Mammary epithelial cell (primary cell): ENCODE measurements at regions of chr17 and their contacts with region 1.

Region 1: GRCh38 chr17:27353461-27354050 is 59.6 kb downstream of the WSB1 start:
- DNase-seq: peak; percentile 89
- H3K4me3 ChIP-seq: peak overlapping the region; percentile 69 to 73 (median 72)
- H3K27ac ChIP-seq: peak overlapping the region; percentile 78
- H3K4me1 ChIP-seq: peaks cover 10% of the 10 kb centered on the region
- H3K27me3 ChIP-seq: no peaks in the 10 kb centered on the region
- CTCF ChIP-seq: peak; percentile 54 to 60

Region 2: GRCh38 chr17:27236717-27237315 is 116.7 kb before region 1 on chr17:
- CTCF ChIA-PET with region 1: no interaction called
- dilution Hi-C with region 1: no loop called
- in situ Hi-C with region 1: no loop called
- intact Hi-C with region 1: loop called (anchors 2 kb)
- DNase-seq: peak; percentile 52
- H3K4me3 ChIP-seq: no peak overlapping the region
- H3K27ac ChIP-seq: no peak overlapping the region
- H3K4me1 ChIP-seq: peaks cover 7% of the 10 kb centered on the region
- H3K27me3 ChIP-seq: no peaks in the 10 kb centered on the region
- CTCF ChIP-seq: peak; percentile 90 to 96

Region 3: DNA sequence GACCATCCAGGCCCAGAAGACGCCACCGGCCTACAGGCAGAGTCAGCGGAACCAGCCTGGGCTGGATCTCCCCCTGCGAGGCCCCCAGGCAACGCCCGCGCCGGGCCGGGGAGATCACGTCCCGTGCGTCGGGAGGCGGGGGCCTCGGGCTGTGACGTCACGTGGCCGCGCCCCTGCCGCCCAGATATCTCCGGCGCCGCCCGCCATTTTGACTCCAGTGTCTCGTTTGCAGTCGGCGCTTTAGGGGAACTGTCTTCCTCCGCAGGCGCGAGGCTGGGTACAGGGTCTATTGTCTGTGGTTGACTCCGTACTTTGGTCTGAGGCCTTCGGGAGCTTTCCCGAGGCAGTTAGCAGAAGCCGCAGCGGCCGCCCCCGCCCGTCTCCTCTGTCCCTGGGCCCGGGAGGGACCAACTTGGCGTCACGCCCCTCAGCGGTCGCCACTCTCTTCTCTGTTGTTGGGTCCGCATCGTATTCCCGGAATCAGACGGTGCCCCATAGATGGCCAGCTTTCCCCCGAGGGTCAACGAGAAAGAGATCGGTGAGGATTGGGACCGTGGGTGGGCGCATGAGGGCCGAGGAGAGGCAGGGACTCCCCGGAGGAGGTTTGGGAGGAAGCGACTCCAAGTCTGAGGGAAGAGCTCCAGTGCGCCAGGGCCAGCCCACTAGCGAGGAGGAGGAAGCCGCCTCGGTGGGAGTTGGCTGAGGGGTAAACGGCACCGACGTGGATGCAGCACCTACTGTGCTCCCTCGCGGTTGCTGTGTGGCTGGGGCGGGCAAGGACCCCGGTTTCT is 59.5 kb before region 1 on chr17 and contains the start of gene WSB1:
- CTCF ChIA-PET with region 1: no interaction called
- dilution Hi-C with region 1: no loop called
- in situ Hi-C with region 1: no loop called
- intact Hi-C with region 1: loop called (anchors 5 kb)
- DNase-seq: peak; percentile 84
- H3K4me3 ChIP-seq: peak within 1 kb of the TSS; percentile 75 to 97 (median 94)
- H3K27ac ChIP-seq: peak within 1 kb of the TSS; percentile 93
- H3K4me1 ChIP-seq: peaks cover 16% of the 10 kb centered on the region
- H3K27me3 ChIP-seq: no peaks in the 10 kb centered on the region
- CTCF ChIP-seq: peak in 1 of 2 donors; percentile 3
- total RNA-seq, gene WSB1: 93.0 to 119 TPM

Region 4: DNA sequence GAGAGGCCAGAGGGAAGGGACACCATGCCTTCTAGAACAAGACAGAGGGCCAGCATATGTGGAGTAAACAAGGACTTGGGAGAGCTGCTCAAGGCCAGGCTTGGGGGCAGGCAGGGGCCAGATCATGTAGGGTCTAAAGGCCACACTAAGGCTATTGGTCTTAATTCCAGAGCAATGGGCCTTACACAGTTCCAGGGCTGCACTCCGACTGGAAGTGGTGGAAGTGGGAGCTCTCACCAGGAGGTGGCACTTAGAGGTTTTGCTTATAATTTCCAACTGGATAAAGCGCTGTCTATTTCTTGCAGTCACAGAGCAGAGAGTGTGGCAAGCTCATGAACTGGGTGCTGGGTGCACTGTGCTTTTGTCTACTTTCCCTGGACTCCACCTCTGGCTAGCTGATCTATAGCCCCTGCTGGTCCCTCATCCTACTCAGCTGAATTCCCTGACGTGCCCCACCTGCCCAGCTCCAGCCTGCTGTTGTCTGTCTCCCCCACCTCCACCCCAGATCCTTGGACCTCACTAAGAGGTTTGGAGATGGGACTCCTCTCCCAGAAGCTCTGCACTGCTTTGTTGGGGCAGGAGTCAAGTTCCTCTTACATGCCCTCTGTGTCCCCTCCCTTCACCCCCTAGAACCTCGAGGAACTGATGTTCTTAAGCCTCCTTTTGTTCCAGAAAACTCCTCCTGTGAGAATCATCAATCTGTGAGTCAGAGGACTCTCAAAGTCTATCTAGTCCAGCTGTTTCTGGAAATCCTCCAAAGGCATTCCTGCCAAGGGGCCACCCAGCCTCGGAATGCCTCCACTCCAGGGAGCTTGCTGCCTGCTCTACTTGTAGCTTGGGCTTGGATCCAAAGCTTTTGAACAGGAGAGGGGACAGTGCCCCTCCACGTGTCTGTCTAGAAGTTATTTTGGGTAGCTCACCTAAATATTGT is 54.6 kb after region 1 on chr17:
- CTCF ChIA-PET with region 1: no interaction called
- dilution Hi-C with region 1: no loop called
- in situ Hi-C with region 1: no loop called
- intact Hi-C with region 1: no loop called
- DNase-seq: peak; percentile 48
- H3K4me3 ChIP-seq: no peak overlapping the region
- H3K27ac ChIP-seq: no peak overlapping the region
- H3K4me1 ChIP-seq: peaks cover 10% of the 10 kb centered on the region
- H3K27me3 ChIP-seq: no peaks in the 10 kb centered on the region
- CTCF ChIP-seq: no peak

Region 5: GRCh38 chr17:27430882-27431491 is 77.4 kb after region 1 on chr17:
- CTCF ChIA-PET with region 1: no interaction called
- dilution Hi-C with region 1: no loop called
- in situ Hi-C with region 1: loop called in 1 of 2 experiments (anchors 5 kb)
- intact Hi-C with region 1: loop called (anchors 1 kb)
- DNase-seq: peak; percentile 44
- H3K4me3 ChIP-seq: no peak overlapping the region
- H3K27ac ChIP-seq: no peak overlapping the region
- H3K4me1 ChIP-seq: peaks cover 5% of the 10 kb centered on the region
- H3K27me3 ChIP-seq: no peaks in the 10 kb centered on the region
- CTCF ChIP-seq: peak; percentile 84 to 91

Region 6: DNA sequence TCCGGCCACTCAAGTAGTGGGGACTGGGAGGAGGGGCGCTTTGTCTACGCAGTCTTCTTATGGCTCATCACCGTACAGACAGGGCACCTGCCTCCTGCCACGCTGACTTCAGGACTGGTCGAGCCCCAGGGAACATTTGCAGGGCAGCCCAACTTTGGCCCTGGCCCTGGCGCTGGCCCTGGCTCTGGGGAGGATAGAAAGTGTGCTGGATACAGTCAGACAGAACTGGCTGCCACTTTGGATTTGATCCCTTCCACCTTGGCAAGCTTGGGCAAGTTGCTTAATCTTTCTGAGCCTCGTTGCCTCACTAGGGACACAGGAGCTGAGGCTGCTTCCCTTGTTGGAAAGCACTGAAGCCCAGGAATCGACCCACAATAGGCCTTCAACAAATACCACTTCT is 291.0 kb after region 1 on chr17:
- CTCF ChIA-PET with region 1: no interaction called
- dilution Hi-C with region 1: no loop called
- in situ Hi-C with region 1: no loop called
- intact Hi-C with region 1: no loop called
- DNase-seq: no peak
- H3K4me3 ChIP-seq: no peak overlapping the region
- H3K27ac ChIP-seq: no peak overlapping the region
- H3K4me1 ChIP-seq: no peaks in the 10 kb centered on the region
- H3K27me3 ChIP-seq: no peaks in the 10 kb centered on the region
- CTCF ChIP-seq: no peak

Region 7: GRCh38 chr17:27778193-27778592 is 424.6 kb after region 1 on chr17:
- CTCF ChIA-PET with region 1: interaction called, 20 read pairs
- dilution Hi-C with region 1: no loop called
- in situ Hi-C with region 1: no loop called
- intact Hi-C with region 1: no loop called
- DNase-seq: peak; percentile 81
- H3K4me3 ChIP-seq: no peak overlapping the region
- H3K27ac ChIP-seq: no peak overlapping the region
- H3K4me1 ChIP-seq: peaks cover 20% of the 10 kb centered on the region
- H3K27me3 ChIP-seq: no peaks in the 10 kb centered on the region
- CTCF ChIP-seq: no peak